ENCODE measurements at regions of chr6 and their contacts with region 1.

Region 1: GRCh38 chr6:31665501-31666336 is at the start of gene CSNK2B:
- DNase-seq: peak; percentile 99
- H3K4me3 Mint-ChIP-seq: peak within 1 kb of the TSS; percentile 96
- H3K27ac Mint-ChIP-seq: peak within 1 kb of the TSS; percentile 96
- H3K4me1 Mint-ChIP-seq: peaks cover 58% of the 10 kb centered on the region
- H3K27me3 Mint-ChIP-seq: no peaks in the 10 kb centered on the region
- total RNA-seq, gene CSNK2B: 288 and 302 TPM in 2 replicates

Region 2: DNA sequence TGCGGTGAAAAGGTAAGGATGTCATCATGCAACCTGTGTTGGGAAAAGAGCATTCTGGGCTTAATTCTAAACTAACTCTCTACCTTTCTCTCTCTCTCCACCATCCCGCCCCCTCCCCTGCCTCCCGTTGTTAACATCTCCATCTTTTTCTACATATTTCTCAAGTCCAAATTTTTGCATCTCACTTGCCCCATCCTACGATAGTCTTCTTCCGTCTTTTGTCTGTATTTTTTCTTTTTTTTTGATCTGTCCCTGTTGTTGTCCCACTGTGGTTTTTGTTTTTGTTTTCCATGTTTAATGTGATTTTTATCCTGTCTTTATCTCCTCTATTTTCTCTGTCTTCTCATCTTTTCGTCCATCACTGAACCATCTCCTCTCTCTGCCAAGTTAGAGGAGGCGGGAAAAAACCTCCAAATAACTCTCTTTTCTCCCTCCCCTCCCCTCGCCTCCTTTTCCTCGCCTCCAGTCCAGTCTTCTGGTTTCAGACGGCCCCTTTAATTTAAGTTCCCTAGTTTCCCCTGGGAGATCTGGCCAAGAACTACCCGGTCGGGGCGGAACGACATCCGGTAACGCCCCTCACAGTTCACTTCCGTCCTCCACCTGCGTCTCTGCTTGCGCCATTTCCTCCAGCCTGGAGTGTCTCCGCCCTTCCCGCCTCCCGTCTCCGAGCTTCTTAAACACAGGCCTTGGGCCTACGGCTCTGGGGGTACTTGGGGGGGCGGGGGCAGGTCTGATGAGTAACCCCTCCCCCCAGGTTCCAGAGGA is 118.6 kb before region 1 on chr6 and contains the start of gene NFKBIL1:
- intact Hi-C with region 1: loop called (anchors 1 kb)
- DNase-seq: peak; percentile 97
- H3K4me3 Mint-ChIP-seq: peak within 1 kb of the TSS; percentile 91
- H3K27ac Mint-ChIP-seq: peak within 1 kb of the TSS; percentile 91
- H3K4me1 Mint-ChIP-seq: peaks cover 51% of the 10 kb centered on the region
- H3K27me3 Mint-ChIP-seq: no peaks in the 10 kb centered on the region
- total RNA-seq, gene NFKBIL1: 14.8 and 16.2 TPM in 2 replicates

Region 3: DNA sequence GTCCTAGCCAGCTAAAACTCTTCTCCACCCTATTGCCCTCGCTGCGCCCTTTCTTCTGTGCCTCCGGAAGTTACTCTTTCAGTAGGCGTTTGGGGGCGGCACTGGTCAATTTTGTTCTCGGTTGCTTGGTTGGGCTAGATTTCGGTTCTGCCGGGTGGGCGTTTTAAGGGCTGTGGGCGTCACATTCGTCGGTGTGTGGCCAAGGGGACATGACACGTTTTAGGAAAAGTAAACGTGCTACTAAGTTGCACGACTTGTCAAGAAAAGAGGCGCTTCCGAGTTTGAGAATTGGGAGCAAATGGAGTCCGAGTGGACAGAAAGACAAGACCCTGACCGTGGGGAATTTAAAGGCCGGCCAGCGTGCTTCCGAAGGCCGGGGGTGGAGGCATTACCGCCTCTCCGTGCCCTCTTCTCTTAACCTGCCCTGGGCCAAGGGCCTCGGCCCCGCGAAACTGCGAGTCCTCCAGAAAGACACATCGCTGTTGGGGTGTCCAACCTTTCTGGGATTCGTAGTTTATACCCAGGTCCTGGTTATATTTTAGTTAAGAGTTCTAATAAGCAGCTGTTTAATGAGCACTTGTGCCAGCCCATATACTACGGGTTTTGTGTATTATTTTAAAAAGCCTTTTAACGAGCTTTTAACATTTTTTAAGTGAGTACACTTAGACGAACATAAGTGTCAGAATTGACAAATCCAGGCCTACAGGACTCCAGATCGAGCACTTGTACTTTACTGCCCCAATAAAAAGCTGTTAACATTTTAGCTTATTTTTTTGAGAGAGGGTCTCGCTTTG is 12.6 kb before region 1 on chr6:
- intact Hi-C with region 1: loop called (anchors 1 kb)
- DNase-seq: no peak
- H3K4me3 Mint-ChIP-seq: peak overlapping the region; percentile 94
- H3K27ac Mint-ChIP-seq: peak overlapping the region; percentile 100
- H3K4me1 Mint-ChIP-seq: peaks cover 58% of the 10 kb centered on the region
- H3K27me3 Mint-ChIP-seq: peaks cover 3% of the 10 kb centered on the region

Region 4: GRCh38 chr6:31702819-31703522 is 37.3 kb after region 1 on chr6 and contains the start of gene ABHD16A:
- intact Hi-C with region 1: loop called (anchors 1 kb)
- DNase-seq: peak; percentile 99
- H3K4me3 Mint-ChIP-seq: peak within 1 kb of the TSS; percentile 98
- H3K27ac Mint-ChIP-seq: peak within 1 kb of the TSS; percentile 99
- H3K4me1 Mint-ChIP-seq: peaks cover 24% of the 10 kb centered on the region
- H3K27me3 Mint-ChIP-seq: no peaks in the 10 kb centered on the region
- total RNA-seq, gene ABHD16A: 43.1 and 44.7 TPM in 2 replicates

Region 5: DNA sequence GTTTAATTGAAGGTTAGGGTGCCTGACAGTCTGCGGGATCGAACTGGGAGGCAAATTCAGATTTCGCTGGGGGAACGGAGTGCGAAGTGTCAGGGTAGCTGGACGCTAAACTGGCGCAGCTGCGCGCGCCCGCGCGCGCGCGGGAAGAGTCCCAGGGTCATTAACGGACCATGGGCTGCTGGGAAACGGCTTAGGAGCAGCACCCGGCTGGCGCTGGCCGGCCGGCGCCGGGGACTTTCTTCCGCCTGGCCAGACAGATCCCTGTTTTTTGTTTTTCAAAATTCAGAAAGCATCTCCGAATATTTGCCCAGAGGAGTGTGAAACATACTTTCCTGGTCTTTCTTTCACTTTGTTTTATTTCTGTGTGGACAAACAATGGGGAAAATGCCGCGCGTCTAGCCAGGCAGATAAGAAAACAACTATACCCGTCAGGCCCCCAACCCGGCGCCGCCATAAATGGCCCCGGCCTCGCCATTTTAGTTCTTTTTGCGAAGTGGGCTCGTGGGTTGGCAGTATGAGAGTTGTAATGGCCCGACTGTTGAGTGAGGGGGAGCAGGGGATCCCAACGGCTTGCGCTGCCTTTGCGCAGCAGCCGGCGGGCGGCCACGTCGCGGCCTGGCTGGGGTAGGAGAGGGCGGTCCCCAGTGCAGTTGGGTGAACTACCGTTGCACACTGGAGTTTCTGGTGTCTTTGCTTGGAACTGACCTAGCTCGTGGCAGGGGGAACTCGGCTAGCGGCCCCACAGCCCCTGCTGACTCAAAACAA is 168.9 kb after region 1 on chr6:
- intact Hi-C with region 1: loop called (anchors 1 kb)
- DNase-seq: peak; percentile 93
- H3K4me3 Mint-ChIP-seq: peak overlapping the region; percentile 97
- H3K27ac Mint-ChIP-seq: peak overlapping the region; percentile 96
- H3K4me1 Mint-ChIP-seq: peaks cover 34% of the 10 kb centered on the region
- H3K27me3 Mint-ChIP-seq: no peaks in the 10 kb centered on the region

Region 6: GRCh38 chr6:32853541-32854375 is 1188.0 kb after region 1 on chr6 and contains the starts of genes PSMB9 and TAP1:
- intact Hi-C with region 1: loop called (anchors 10 kb)
- DNase-seq: peak; percentile 98
- H3K4me3 Mint-ChIP-seq: peak within 1 kb of the TSS; percentile 97
- H3K27ac Mint-ChIP-seq: peak within 1 kb of the TSS; percentile 96
- H3K4me1 Mint-ChIP-seq: peaks cover 59% of the 10 kb centered on the region
- H3K27me3 Mint-ChIP-seq: no peaks in the 10 kb centered on the region
- total RNA-seq, gene PSMB9: 249 and 257 TPM in 2 replicates
- total RNA-seq, gene TAP1: 275 and 283 TPM in 2 replicates